A673 (cell line): ENCODE measurements at regions of chr5 and their contacts with region 1.

Region 1: DNA sequence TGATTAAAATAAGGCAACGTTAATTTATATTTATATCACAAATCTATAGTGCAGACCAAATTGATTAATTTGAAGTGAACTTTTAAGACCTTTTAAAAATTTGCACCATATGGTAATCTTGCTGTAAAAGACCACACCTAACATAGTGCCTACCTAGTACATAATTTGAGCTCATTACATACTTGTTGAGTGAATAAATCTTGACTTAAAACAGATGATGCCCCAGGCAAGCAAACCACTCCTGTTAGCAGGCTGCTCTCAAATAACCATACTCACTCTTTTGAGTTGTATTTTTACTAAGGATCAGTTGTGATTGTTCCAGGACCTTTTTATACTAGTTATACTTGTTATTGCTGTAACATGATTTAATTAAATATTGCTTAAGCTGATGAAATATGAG is 27.2 kb downstream of the CMYA5 start:
- DNase-seq: no peak
- H3K4me3 ChIP-seq: no peak overlapping the region
- H3K27ac ChIP-seq: no peak overlapping the region
- H3K4me1 ChIP-seq: no peaks in the 10 kb centered on the region
- H3K27me3 ChIP-seq: no peaks in the 10 kb centered on the region
- CTCF ChIP-seq: no peak

Region 2: DNA sequence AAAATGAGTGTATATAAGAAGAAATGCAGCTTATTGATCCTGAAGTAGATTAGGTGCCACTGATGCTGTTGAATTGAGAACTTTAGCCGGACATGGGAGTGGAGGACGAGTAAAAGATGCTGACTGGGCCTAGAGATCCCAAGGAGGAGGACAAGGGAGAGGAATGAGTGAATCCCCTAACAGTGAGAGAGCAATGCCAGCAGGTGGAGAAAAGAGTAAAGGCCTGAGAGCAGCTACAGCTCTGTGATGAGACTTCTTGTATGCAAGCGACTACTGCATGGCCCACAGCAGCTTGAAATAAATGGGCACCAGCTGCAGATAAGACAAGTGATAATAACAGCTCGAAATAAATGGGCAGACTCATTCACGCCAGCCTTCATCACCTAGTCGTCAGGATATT is 525.4 kb before region 1 on chr5:
- CTCF ChIA-PET with region 1: no interaction called
- POLR2A ChIA-PET with region 1: interaction called, 11 read pairs
- intact Hi-C with region 1: no loop called
- DNase-seq: no peak
- H3K4me3 ChIP-seq: no peak overlapping the region
- H3K27ac ChIP-seq: no peak overlapping the region
- H3K4me1 ChIP-seq: no peaks in the 10 kb centered on the region
- H3K27me3 ChIP-seq: no peaks in the 10 kb centered on the region
- CTCF ChIP-seq: no peak

Region 3: DNA sequence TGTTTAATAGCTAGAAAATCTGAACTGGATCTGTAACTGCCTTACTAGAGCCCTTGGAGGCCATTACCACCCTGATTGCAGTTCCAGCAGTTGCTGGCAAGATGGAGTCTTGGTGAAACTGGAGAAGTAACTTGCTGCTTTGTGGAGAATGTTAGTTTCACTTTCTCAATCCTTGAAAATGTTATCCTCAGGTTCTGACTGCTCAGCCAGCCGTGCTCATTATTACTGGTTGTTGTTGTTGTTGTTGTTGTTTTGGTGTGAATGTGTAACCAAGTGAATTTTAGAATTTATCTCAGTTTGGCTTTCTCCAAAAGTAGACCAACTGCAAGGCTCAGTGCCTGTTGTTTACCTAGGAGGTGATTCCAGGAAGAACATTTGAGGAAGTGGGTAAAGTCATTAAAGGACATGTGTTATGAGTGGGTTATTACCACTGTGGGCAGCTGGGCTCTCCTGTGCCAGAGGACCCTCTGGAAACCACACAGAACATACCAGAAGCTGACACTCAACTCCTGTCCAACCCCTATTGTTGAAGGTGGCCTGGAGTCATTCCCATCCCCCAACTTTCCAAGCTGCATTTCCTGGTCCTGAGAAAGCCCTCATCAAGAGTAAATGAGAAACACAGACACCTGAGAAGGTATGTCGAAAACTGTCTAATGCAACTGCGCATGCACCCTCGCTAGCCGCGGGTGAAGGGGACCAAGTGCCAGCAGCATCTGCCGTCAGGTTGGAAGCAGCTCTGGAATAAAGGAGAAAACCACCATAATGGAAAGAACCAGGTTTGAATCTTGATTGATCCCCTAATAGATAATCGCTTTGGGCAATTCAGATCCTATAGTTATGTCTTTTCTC is 84.4 kb after region 1 on chr5:
- CTCF ChIA-PET with region 1: no interaction called
- POLR2A ChIA-PET with region 1: no interaction called
- intact Hi-C with region 1: no loop called
- DNase-seq: no peak
- H3K4me3 ChIP-seq: no peak overlapping the region
- H3K27ac ChIP-seq: no peak overlapping the region
- H3K4me1 ChIP-seq: no peaks in the 10 kb centered on the region
- H3K27me3 ChIP-seq: no peaks in the 10 kb centered on the region
- CTCF ChIP-seq: no peak